PC-9 (cell line): ENCODE measurements at regions of chr20 and their contacts with region 1.

Region 1: GRCh38 chr20:41617931-41618806 is at the start of gene CHD6:
- DNase-seq: peak; percentile 99 to 100
- H3K4me3 ChIP-seq: peak within 1 kb of the TSS; percentile 94
- H3K27ac ChIP-seq: peak within 1 kb of the TSS; percentile 51; the same call in 1 of the 2 replicates
- H3K4me1 ChIP-seq: peaks cover 19% of the 10 kb centered on the region
- H3K27me3 ChIP-seq: no peaks in the 10 kb centered on the region; the same call in 1 of the 2 replicates
- CTCF ChIP-seq: no peak
- total RNA-seq, gene CHD6: 48.6 and 51.1 TPM in 2 replicates

Region 2: GRCh38 chr20:41513829-41514228 is 104.3 kb before region 1 on chr20:
- CTCF ChIA-PET with region 1: no interaction called
- POLR2A ChIA-PET with region 1: no interaction called
- intact Hi-C with region 1: no loop called
- DNase-seq: no peak
- H3K4me3 ChIP-seq: no peak overlapping the region
- H3K27ac ChIP-seq: no peak overlapping the region
- H3K4me1 ChIP-seq: no peaks in the 10 kb centered on the region
- H3K27me3 ChIP-seq: no peaks in the 10 kb centered on the region
- CTCF ChIP-seq: no peak

Region 3: DNA sequence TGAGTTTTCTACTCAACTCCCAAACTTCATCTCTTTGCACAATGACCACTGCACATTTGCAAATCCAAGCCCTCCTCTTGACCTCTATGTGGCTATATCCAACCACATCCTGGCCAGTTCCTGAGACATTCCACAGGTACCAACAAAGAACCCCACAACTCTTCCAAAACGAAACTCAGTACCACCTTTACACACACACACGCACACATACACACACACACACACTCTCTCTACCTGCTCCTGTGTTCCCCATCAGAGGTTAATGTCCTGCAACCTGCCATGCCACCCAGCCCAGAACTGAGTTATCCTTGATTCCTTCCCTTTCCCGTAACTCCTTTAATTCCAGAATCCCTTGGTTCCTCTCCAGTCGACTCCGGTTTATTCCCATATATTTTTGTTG is 58.5 kb before region 1 on chr20:
- CTCF ChIA-PET with region 1: no interaction called
- POLR2A ChIA-PET with region 1: no interaction called
- intact Hi-C with region 1: loop called (anchors 2 kb)
- DNase-seq: no peak
- H3K4me3 ChIP-seq: no peak overlapping the region
- H3K27ac ChIP-seq: no peak overlapping the region
- H3K4me1 ChIP-seq: no peaks in the 10 kb centered on the region
- H3K27me3 ChIP-seq: no peaks in the 10 kb centered on the region
- CTCF ChIP-seq: no peak

Region 4: GRCh38 chr20:41643504-41643938 is 25.4 kb after region 1 on chr20:
- CTCF ChIA-PET with region 1: interaction called, 6 read pairs
- POLR2A ChIA-PET with region 1: interaction called, 9 read pairs
- intact Hi-C with region 1: loop called (anchors 1 kb)
- DNase-seq: peak; percentile 80 to 83
- H3K4me3 ChIP-seq: no peak overlapping the region
- H3K27ac ChIP-seq: peak overlapping the region; percentile 44
- H3K4me1 ChIP-seq: peaks cover 22% of the 10 kb centered on the region
- H3K27me3 ChIP-seq: peaks cover 3% of the 10 kb centered on the region; the same call in 1 of the 2 replicates
- CTCF ChIP-seq: no peak

Region 5: DNA sequence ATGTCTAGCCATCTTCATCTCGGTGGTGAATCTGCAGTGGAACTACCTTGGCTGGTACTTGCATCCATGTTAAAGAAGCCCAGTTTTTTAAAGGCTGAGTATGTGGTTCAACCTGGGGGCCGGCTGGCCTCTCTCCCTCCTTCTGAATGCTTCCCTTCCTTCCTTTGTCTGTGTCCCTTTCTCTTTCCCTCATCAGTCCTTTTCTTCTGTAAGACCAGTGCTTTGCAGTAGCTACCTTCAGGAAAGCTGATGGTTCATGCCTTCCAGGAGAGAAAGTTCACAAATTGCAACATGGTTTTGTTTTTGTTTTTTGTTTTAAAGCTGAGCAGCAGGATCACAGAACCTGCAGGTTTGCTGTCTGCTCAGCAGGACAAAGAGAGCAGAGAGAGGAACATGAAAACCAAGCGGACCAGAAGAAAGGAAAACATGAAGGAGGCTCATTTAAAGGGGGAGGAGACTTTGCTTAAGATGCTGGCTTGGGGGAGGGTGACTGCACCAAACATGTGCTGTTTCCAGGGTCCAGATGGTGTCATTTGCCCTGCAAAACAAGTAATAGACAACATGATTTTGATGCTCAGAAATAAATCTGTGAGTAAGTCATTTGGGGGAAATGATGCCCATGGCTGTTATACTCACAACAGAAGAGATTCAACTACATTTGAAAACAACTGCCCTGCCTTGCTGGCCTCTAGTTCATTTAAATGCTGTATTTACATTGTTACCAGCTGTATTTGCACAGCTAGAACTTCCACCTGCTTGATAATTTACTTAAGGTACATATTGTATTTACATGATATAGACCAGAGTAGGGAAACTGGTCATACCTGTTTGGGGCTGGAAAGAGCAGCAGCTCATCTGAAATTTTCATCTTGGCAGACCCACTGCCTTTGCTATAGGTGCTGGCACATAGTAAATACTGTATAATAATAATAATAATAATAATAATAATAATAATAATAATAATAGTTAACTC is 32.1 kb after region 1 on chr20:
- CTCF ChIA-PET with region 1: no interaction called
- POLR2A ChIA-PET with region 1: no interaction called
- intact Hi-C with region 1: loop called (anchors 2 kb)
- DNase-seq: peak; percentile 23 to 95
- H3K4me3 ChIP-seq: no peak overlapping the region
- H3K27ac ChIP-seq: no peak overlapping the region
- H3K4me1 ChIP-seq: peaks cover 28% of the 10 kb centered on the region
- H3K27me3 ChIP-seq: no peaks in the 10 kb centered on the region
- CTCF ChIP-seq: no peak

Region 6: GRCh38 chr20:41693136-41693979 is 75.2 kb after region 1 on chr20:
- CTCF ChIA-PET with region 1: interaction called, 4 read pairs
- POLR2A ChIA-PET with region 1: interaction called, 5 read pairs
- intact Hi-C with region 1: loop called (anchors 1 kb)
- DNase-seq: peak; percentile 76 to 87
- H3K4me3 ChIP-seq: peak overlapping the region; percentile 83
- H3K27ac ChIP-seq: peak overlapping the region; percentile 52
- H3K4me1 ChIP-seq: peaks cover 12% of the 10 kb centered on the region
- H3K27me3 ChIP-seq: peaks cover 15% of the 10 kb centered on the region; the same call in 1 of the 2 replicates
- CTCF ChIP-seq: peak; percentile 66; the same call in 1 of the 2 replicates